Activated naive CD4-positive, alpha-beta T cell treated with anti-CD3 and anti-CD28 coated beads for 36 hours (primary cell): ENCODE measurements at regions of chr17 and their contacts with region 1.

Region 1: GRCh38 chr17:42677008-42677857 is 439 bp upstream of the PLEKHH3 start:
- DNase-seq: peak; percentile 100
- H3K4me3 Mint-ChIP-seq: peak overlapping the region; percentile 88
- H3K27ac Mint-ChIP-seq: peak overlapping the region; percentile 41
- H3K4me1 Mint-ChIP-seq: peaks cover 51% of the 10 kb centered on the region
- H3K27me3 Mint-ChIP-seq: peaks cover 48% of the 10 kb centered on the region

Region 2: DNA sequence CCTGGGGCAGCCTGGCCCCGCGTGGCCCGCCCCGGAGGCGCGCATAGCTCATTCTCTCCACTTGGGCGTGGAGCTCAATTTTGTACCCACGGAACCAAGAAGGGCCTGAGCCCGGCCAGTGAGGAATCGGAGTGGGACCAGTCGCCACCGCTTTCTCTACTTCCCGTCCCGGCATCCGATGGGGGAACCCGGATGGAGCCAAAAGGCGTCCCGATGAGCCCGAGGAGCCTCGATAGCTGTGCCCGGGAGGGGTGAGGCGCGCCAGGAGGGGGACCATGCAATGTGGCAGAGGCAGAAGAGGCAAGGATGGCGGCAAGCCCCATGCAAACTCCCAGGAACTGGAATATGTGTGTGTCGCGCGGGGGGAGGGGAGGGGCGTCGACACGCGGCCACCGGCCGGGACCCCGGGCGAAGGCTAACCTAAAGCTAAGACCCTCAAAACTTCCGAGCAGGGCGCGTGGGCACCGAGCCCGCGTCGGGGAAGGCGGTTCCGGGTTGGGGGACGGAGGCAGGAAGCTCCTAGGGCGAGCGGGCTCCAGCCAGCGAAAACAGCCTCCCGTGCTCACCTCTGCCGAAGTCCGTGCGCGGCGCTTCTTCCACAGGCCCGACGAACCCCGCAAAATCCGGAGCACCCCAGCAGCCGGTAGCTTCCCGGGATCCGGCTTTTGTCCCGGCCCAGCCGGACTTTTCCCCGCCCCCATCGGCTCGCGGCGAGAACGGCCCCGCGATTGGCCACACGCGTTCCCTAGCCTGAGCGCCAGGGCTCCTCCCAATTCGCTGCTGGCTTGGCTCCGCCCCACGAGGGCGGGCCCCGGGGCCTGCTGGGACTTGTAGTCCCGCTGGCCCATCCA is 758.7 kb before region 1 on chr17 and contains the start of gene ACLY:
- CTCF ChIA-PET with region 1: no interaction called
- intact Hi-C with region 1: loop called (anchors 2 kb)
- DNase-seq: peak; percentile 96
- H3K4me3 Mint-ChIP-seq: peak within 1 kb of the TSS; percentile 94
- H3K27ac Mint-ChIP-seq: peak within 1 kb of the TSS; percentile 82
- H3K4me1 Mint-ChIP-seq: peaks cover 39% of the 10 kb centered on the region
- H3K27me3 Mint-ChIP-seq: no peaks in the 10 kb centered on the region
- total RNA-seq, gene ACLY: 153 to 161 TPM

Region 3: DNA sequence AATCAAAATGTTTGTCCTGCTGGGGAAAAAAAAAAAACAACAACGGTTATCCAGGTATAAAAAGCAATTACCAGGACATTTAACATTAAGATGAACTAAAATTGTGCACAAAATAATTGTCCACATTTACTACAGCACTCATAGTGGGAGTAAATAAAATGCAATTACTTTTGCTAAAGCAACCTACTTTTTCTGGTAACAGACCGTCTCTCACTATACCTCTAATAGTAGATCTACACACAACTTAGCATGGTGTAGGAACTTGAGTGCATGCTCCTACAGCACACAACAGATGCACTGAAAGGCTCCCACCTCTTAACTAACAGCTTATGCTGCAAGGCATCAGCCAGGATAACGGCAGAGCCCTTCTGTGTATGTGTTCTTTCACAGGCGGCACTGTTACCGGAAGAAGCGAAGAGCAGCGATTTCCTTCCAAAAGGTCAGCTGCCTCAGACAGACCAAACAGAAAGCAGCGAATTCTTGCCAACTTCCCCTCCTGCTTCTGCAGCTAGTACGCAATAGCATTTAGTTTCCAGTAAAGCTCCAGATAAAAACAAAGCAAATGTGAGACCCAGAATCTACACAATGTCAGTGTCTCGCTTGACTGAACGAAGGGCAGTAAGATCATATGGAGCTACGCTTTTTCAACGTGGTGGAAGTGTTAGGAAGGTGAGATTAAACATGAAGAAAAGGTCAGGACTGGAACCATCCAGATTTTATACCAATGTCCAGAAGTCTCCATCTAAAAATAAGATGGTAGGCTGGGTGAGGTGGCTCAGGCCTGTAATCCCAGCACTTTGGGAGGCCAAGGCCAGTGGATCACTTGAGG is 428.7 kb before region 1 on chr17:
- CTCF ChIA-PET with region 1: no interaction called
- intact Hi-C with region 1: loop called (anchors 5 kb)
- DNase-seq: peak; percentile 92
- H3K4me3 Mint-ChIP-seq: peak overlapping the region; percentile 74
- H3K27ac Mint-ChIP-seq: peak overlapping the region; percentile 97
- H3K4me1 Mint-ChIP-seq: peaks cover 71% of the 10 kb centered on the region
- H3K27me3 Mint-ChIP-seq: no peaks in the 10 kb centered on the region

Region 4: GRCh38 chr17:42334677-42335076 is 342.6 kb before region 1 on chr17:
- CTCF ChIA-PET with region 1: no interaction called
- intact Hi-C with region 1: no loop called
- DNase-seq: no peak
- H3K4me3 Mint-ChIP-seq: no peak overlapping the region
- H3K27ac Mint-ChIP-seq: peak overlapping the region; percentile 91
- H3K4me1 Mint-ChIP-seq: peaks cover 66% of the 10 kb centered on the region
- H3K27me3 Mint-ChIP-seq: no peaks in the 10 kb centered on the region

Region 5: GRCh38 chr17:42428141-42428944 is 248.9 kb before region 1 on chr17:
- CTCF ChIA-PET with region 1: no interaction called
- intact Hi-C with region 1: loop called (anchors 10 kb)
- DNase-seq: peak; percentile 57
- H3K4me3 Mint-ChIP-seq: no peak overlapping the region
- H3K27ac Mint-ChIP-seq: no peak overlapping the region
- H3K4me1 Mint-ChIP-seq: peaks cover 4% of the 10 kb centered on the region
- H3K27me3 Mint-ChIP-seq: peaks cover 9% of the 10 kb centered on the region

Region 6: DNA sequence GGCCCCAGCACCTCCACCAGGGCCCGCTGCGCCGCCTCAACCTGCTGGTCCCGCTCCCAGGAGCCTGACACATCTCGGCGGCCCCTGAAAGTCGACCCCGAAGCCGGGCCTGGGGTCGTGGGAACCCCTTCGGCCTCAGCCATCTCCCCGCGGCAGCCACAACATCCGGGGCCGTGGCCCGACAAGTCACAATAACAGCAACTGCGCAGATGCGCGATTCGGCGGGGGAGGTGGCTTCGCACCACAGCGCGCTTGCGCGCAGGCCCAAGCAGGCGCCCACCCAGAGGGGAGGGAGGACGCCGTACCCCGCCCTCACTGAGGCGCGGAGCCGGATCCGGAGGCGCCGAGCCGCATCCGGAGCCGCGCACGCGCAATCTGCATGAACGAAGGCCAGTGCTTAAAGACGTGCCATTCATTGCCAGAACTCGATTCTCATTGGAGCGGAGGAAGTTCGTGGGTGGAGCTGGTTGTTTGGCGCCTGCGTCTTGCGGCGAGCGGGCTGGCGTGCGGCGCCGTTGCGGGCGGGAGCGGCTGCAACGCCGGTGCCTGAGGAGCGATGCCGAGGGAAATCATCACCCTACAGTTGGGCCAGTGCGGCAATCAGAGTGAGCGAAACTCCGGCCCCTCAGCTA is 67.9 kb before region 1 on chr17 and contains the starts of genes RETREG3 and TUBG1:
- CTCF ChIA-PET with region 1: interaction called, 15 read pairs
- intact Hi-C with region 1: loop called (anchors 1 kb)
- DNase-seq: peak; percentile 99
- H3K4me3 Mint-ChIP-seq: peak within 1 kb of the TSS; percentile 100
- H3K27ac Mint-ChIP-seq: peak within 1 kb of the TSS; percentile 93
- H3K4me1 Mint-ChIP-seq: peaks cover 45% of the 10 kb centered on the region
- H3K27me3 Mint-ChIP-seq: no peaks in the 10 kb centered on the region
- total RNA-seq, gene RETREG3: 28.6 to 33.5 TPM
- total RNA-seq, gene TUBG1: 91.3 to 92.0 TPM

Region 7: GRCh38 chr17:42744806-42745617 is 67.8 kb after region 1 on chr17 and contains the start of gene EZH1:
- CTCF ChIA-PET with region 1: no interaction called
- intact Hi-C with region 1: loop called (anchors 2 kb)
- DNase-seq: peak; percentile 93
- H3K4me3 Mint-ChIP-seq: peak within 1 kb of the TSS; percentile 90
- H3K27ac Mint-ChIP-seq: peak within 1 kb of the TSS; percentile 93
- H3K4me1 Mint-ChIP-seq: peaks cover 21% of the 10 kb centered on the region
- H3K27me3 Mint-ChIP-seq: peaks cover 6% of the 10 kb centered on the region
- total RNA-seq, gene EZH1: 31.9 to 34.0 TPM

Region 8: DNA sequence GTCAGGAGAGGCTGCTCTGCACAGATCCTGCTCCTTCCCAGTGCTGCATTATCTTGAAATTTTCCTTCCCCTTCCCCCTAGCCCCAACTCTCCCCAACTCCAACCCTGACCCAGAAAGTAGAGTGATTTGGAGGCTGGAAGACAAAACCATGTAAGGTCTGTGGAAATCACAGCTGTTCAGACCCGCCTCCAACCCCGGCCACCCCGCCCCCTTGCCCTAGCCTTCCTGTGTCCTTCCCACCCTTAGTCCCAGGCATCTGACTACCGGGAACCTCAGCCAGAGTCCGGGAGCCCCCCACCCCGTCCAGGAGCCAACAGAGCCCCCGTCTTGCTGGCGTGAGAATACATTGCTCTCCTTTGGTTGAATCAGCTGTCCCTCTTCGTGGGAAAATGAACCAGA is 173.7 kb after region 1 on chr17 and contains the start of gene AOC3:
- CTCF ChIA-PET with region 1: no interaction called
- intact Hi-C with region 1: no loop called
- DNase-seq: no peak
- H3K4me3 Mint-ChIP-seq: no peak within 1 kb of the TSS
- H3K27ac Mint-ChIP-seq: peak within 1 kb of the TSS; percentile 30
- H3K4me1 Mint-ChIP-seq: peaks cover 4% of the 10 kb centered on the region
- H3K27me3 Mint-ChIP-seq: no peaks in the 10 kb centered on the region
- total RNA-seq, gene AOC3: 1.4 to 2.6 TPM

Region 9: GRCh38 chr17:43170766-43171585 is 493.7 kb after region 1 on chr17 and contains the start of gene NBR1:
- CTCF ChIA-PET with region 1: no interaction called
- intact Hi-C with region 1: loop called (anchors 2 kb)
- DNase-seq: peak; percentile 99
- H3K4me3 Mint-ChIP-seq: no peak within 1 kb of the TSS
- H3K27ac Mint-ChIP-seq: no peak within 1 kb of the TSS
- H3K4me1 Mint-ChIP-seq: peaks cover 36% of the 10 kb centered on the region
- H3K27me3 Mint-ChIP-seq: no peaks in the 10 kb centered on the region
- total RNA-seq, gene NBR1: 62.1 to 66.8 TPM